Sciatic nerve (tissue), 2 donors: ENCODE measurements at regions of chr7 and their contacts with region 1.

Region 1: DNA sequence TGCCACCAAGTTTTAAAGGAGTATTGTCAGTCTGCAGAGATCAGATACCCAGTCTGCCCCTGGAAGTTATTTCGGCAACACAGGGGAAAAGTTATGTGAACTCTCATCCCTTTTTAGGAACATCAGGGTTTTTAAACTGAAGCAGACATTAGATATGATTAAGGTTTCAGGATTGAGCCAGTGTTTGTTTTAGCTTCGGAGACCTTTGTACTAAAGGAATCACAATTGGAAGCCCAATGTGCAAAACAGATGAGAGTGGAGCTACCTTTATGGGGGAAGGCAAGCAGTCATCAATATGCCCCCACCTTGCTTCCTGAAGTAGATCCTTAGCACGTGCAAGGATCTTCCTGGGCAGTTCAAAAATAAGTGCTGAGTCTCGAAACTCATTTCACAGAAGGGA is 39.5 kb downstream of the ETV1 start:
- DNase-seq: no peak
- ATAC-seq: no peak

Region 2: GRCh38 chr7:13466874-13467547 is 482.9 kb before region 1 on chr7:
- intact Hi-C with region 1: no loop called
- DNase-seq: no peak
- ATAC-seq: no peak

Region 3: GRCh38 chr7:13890793-13891192 is 59.1 kb before region 1 on chr7:
- intact Hi-C with region 1: loop called (anchors 2 kb)
- DNase-seq: no peak
- ATAC-seq: no peak

Region 4: GRCh38 chr7:14630048-14630447 is 680.1 kb after region 1 on chr7:
- intact Hi-C with region 1: no loop called
- DNase-seq: no peak
- ATAC-seq: no peak